ENCODE measurements at regions of chr2 and their contacts with region 1.

Region 1: DNA sequence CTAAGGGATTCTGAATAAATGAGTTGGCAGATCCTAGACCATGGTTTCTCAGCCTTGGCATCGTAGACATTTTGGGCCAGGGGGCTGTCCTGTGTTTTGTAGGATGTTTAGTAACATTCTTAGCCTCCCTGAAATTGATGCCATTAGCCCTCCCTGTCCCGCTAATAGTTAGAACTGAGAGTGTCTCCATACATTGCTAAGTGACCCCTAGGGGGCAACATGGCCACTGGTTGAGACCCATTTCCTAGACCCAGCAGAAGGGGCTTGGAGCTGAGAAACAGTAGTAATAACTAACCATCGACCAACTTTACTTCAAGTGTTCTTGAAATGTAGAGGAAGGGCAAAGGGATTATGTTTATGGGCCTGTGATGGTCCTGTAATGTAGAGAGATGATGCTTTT is 40.8 kb downstream of the KCMF1 start:
- DNase-seq: no peak
- ATAC-seq: no peak
- H3K4me3 ChIP-seq: no peak overlapping the region
- H3K4me3 Mint-ChIP-seq: peak overlapping the region in 7 of 10 donors; percentile 18 to 40 (median 35)
- H3K27ac ChIP-seq: peak overlapping the region; percentile 15
- H3K27ac Mint-ChIP-seq: peak overlapping the region; percentile 26 to 92 (median 56)
- H3K4me1 ChIP-seq: peaks cover 3 to 25% of the 10 kb centered on the region in 2 donors
- H3K4me1 Mint-ChIP-seq: peaks cover 65 to 86% (median 78%) of the 10 kb centered on the region in 7 donors
- H3K27me3 ChIP-seq: no peaks in the 10 kb centered on the region
- H3K27me3 Mint-ChIP-seq: no peaks in the 10 kb centered on the region

Region 2: GRCh38 chr2:84631047-84631446 is 380.7 kb before region 1 on chr2:
- CTCF ChIA-PET with region 1: interaction called, 3 read pairs
- POLR2A ChIA-PET with region 1: no interaction called
- intact Hi-C with region 1: loop called in 1 of 2 experiments (anchors 5 kb)
- DNase-seq: peak in 6 of 9 donors; percentile 21 to 57 (median 50)
- ATAC-seq: peak; percentile 69
- H3K4me3 ChIP-seq: no peak overlapping the region
- H3K4me3 Mint-ChIP-seq: peak overlapping the region in 4 of 10 donors; percentile 5 to 60 (median 34)
- H3K27ac ChIP-seq: no peak overlapping the region
- H3K27ac Mint-ChIP-seq: peak overlapping the region in 5 of 9 donors; percentile 12 to 80 (median 33)
- H3K4me1 ChIP-seq: peaks cover 0 to 15% of the 10 kb centered on the region in 2 donors
- H3K4me1 Mint-ChIP-seq: peaks cover 16 to 56% (median 52%) of the 10 kb centered on the region in 7 donors
- H3K27me3 ChIP-seq: no peaks in the 10 kb centered on the region
- H3K27me3 Mint-ChIP-seq: peaks cover 0 to 2% (median 0%) of the 10 kb centered on the region in 5 donors

Region 3: GRCh38 chr2:84894758-84895520 is 116.8 kb before region 1 on chr2:
- CTCF ChIA-PET with region 1: no interaction called
- POLR2A ChIA-PET with region 1: no interaction called
- intact Hi-C with region 1: no loop called
- DNase-seq: peak in 6 of 9 donors; percentile 36 to 61 (median 53)
- ATAC-seq: peak; percentile 70
- H3K4me3 ChIP-seq: peak overlapping the region; percentile 40
- H3K4me3 Mint-ChIP-seq: peak overlapping the region; percentile 47 to 82 (median 71)
- H3K27ac ChIP-seq: peak overlapping the region; percentile 77
- H3K27ac Mint-ChIP-seq: peak overlapping the region; percentile 53 to 99 (median 93)
- H3K4me1 ChIP-seq: peaks cover 37 to 47% of the 10 kb centered on the region in 2 donors
- H3K4me1 Mint-ChIP-seq: peaks cover 40 to 71% (median 64%) of the 10 kb centered on the region in 7 donors
- H3K27me3 ChIP-seq: no peaks in the 10 kb centered on the region
- H3K27me3 Mint-ChIP-seq: no peaks in the 10 kb centered on the region

Region 4: DNA sequence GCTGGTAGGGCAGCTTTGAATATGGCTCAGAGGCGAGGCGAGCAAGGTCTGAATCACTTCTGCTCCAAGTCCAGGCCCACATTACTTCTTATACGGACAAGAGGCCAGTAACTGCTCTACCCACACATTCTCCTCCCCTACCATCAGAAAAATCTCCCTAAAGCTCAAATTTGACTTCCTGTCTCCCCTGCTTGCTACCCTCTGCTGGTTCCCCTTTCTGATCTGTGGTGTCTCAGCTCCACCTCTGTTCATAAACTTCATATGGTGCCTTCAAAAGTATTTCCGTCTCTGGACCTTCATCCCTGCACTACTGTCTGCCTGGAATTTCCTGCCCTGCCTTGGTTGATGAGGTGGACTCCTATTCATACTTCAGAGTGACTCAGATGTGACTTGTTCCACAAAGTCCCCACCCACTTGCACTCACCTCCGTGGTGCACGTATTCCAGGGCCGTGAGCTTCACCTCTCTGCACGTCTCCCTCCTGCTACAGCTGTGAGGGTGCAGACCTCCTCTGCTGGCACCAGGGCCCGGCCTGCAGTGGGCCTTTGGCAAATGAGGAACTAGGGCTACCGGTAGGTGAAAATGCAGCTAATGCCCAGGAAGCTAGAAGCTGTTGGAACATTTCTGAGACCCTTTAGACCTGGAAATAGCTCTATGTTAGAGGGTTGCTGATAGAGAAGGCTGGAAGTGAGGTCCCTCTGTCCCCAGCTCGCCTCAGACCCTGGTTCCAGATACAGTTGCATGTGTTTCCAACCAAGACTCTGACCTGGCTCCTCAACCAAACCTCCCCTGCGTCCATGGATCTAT is 65.3 kb before region 1 on chr2:
- CTCF ChIA-PET with region 1: interaction called, 3 read pairs
- POLR2A ChIA-PET with region 1: no interaction called
- intact Hi-C with region 1: loop called in 1 of 2 experiments (anchors 5 kb)
- DNase-seq: peak; percentile 20 to 74 (median 57)
- ATAC-seq: peak; percentile 90
- H3K4me3 ChIP-seq: peak overlapping the region; percentile 9
- H3K4me3 Mint-ChIP-seq: peak overlapping the region; percentile 43 to 83 (median 72)
- H3K27ac ChIP-seq: peak overlapping the region; percentile 64
- H3K27ac Mint-ChIP-seq: peak overlapping the region; percentile 42 to 93 (median 81)
- H3K4me1 ChIP-seq: peaks cover 16 to 23% of the 10 kb centered on the region in 2 donors
- H3K4me1 Mint-ChIP-seq: peaks cover 27 to 66% (median 32%) of the 10 kb centered on the region in 7 donors
- H3K27me3 ChIP-seq: no peaks in the 10 kb centered on the region
- H3K27me3 Mint-ChIP-seq: no peaks in the 10 kb centered on the region

Region 5: GRCh38 chr2:84986018-84986417 is 25.7 kb before region 1 on chr2:
- CTCF ChIA-PET with region 1: no interaction called
- POLR2A ChIA-PET with region 1: no interaction called
- intact Hi-C with region 1: no loop called
- DNase-seq: no peak
- ATAC-seq: no peak
- H3K4me3 ChIP-seq: no peak overlapping the region
- H3K4me3 Mint-ChIP-seq: peak overlapping the region in 9 of 10 donors; percentile 3 to 68 (median 31)
- H3K27ac ChIP-seq: no peak overlapping the region
- H3K27ac Mint-ChIP-seq: peak overlapping the region in 8 of 9 donors; percentile 6 to 84 (median 30)
- H3K4me1 ChIP-seq: peaks cover 50 to 63% of the 10 kb centered on the region in 2 donors
- H3K4me1 Mint-ChIP-seq: peaks cover 35 to 55% (median 42%) of the 10 kb centered on the region in 7 donors
- H3K27me3 ChIP-seq: no peaks in the 10 kb centered on the region
- H3K27me3 Mint-ChIP-seq: no peaks in the 10 kb centered on the region

Region 6: GRCh38 chr2:84996906-84997305 is 14.8 kb before region 1 on chr2:
- CTCF ChIA-PET with region 1: interaction called, 3 read pairs
- POLR2A ChIA-PET with region 1: interaction called, 3 read pairs
- intact Hi-C with region 1: loop called in 1 of 2 experiments (anchors 1 kb)
- DNase-seq: no peak
- ATAC-seq: no peak
- H3K4me3 ChIP-seq: no peak overlapping the region
- H3K4me3 Mint-ChIP-seq: peak overlapping the region in 2 of 10 donors; percentile 8 to 14
- H3K27ac ChIP-seq: no peak overlapping the region
- H3K27ac Mint-ChIP-seq: no peak overlapping the region
- H3K4me1 ChIP-seq: peaks cover 14 to 16% of the 10 kb centered on the region in 2 donors
- H3K4me1 Mint-ChIP-seq: peaks cover 28 to 71% (median 55%) of the 10 kb centered on the region in 7 donors
- H3K27me3 ChIP-seq: no peaks in the 10 kb centered on the region
- H3K27me3 Mint-ChIP-seq: no peaks in the 10 kb centered on the region

Region 7: GRCh38 chr2:85376291-85377065 is 364.7 kb after region 1 on chr2:
- CTCF ChIA-PET with region 1: no interaction called
- POLR2A ChIA-PET with region 1: no interaction called
- intact Hi-C with region 1: no loop called
- DNase-seq: no peak
- ATAC-seq: no peak
- H3K4me3 ChIP-seq: no peak overlapping the region
- H3K4me3 Mint-ChIP-seq: no peak overlapping the region
- H3K27ac ChIP-seq: no peak overlapping the region
- H3K27ac Mint-ChIP-seq: peak overlapping the region in 1 of 9 donors; percentile 77
- H3K4me1 ChIP-seq: no peaks in the 10 kb centered on the region
- H3K4me1 Mint-ChIP-seq: no peaks in the 10 kb centered on the region
- H3K27me3 ChIP-seq: no peaks in the 10 kb centered on the region
- H3K27me3 Mint-ChIP-seq: no peaks in the 10 kb centered on the region